Activated naive CD4-positive, alpha-beta T cell treated with anti-CD3 and anti-CD28 coated beads for 36 hours (primary cell): ENCODE measurements at regions of chr14 and their contacts with region 1.

Region 1: DNA sequence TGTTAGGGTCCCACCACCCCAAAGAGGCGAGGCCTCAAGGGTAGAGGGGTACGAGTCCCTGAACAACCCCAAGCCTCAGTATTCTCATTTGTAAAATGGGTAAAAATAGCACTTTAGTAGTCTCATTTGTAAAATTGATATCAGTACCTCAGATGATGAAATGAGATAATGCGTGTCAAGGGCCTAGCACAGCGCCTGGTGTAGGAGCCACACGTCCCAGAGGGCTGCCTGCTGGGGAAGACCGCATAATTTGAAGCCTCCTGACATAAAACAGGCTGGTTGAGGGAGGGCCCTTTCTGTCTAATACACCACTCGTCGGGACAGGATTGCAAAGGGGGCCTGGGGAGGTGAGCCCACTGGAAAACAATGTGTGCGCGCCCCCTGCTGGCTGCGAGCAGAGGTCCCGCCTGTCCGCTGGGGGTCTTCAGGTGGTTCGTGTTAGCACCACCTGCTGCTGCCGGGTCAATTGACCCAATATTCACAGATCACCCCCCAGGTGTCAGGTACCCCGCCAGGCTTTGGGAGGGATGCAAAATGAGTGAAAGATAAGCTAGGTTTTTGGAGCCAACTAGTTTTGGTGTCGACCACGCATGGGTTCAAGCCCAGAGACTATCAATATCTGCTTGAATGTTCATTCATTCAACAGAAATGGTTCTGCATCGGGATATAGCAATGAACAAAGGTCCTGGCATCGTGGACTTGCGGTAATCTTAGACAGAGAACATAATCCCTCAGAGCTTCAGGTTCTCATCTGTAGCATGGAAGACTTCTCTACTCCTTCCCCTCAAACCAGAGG is 24.7 kb upstream of the IRF2BPL start:
- DNase-seq: peak; percentile 86
- H3K4me3 Mint-ChIP-seq: no peak overlapping the region
- H3K27ac Mint-ChIP-seq: no peak overlapping the region
- H3K4me1 Mint-ChIP-seq: peaks cover 21% of the 10 kb centered on the region
- H3K27me3 Mint-ChIP-seq: no peaks in the 10 kb centered on the region

Region 2: DNA sequence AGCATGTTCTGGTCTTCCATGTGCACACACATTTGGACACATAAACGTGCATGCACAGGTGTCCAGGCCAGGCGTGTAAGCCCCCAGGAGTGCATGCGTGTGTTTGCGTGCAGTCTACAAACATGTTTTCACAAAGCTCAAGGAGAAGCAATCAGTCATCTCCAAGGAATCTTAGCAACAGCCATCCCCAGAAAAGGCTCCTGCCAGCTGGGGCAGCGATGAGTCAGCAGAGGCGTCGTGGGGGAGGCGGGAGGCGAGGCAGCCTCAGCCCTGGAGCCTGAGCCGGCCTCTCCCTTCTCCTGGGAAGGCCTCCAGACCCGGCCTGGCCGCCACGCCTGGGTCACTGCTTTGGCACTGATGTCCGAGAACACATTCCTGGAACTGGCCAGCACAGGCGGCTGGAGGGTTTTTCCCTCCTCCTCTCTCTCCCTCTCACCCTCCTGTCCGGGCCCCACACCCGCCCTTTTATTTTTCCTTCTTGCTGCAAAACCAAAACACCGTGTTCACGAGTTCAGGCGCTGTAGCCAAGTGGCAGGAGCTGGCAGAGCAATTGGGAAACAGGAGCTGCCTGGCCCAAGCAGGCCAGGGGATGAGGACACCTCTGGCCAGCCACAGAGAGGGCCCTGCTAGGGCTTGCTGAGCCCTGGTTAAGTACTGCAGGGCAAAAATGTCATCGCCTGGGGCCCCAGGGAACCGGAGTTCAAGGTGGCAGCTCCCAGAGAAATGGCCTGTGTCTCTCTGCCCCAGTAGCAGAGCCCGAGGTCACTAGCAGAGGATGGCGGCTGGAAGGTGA is 134.3 kb before region 1 on chr14:
- CTCF ChIA-PET with region 1: interaction called, 299 read pairs
- intact Hi-C with region 1: no loop called
- DNase-seq: peak; percentile 42
- H3K4me3 Mint-ChIP-seq: no peak overlapping the region
- H3K27ac Mint-ChIP-seq: peak overlapping the region; percentile 16
- H3K4me1 Mint-ChIP-seq: peaks cover 43% of the 10 kb centered on the region
- H3K27me3 Mint-ChIP-seq: no peaks in the 10 kb centered on the region

Region 3: GRCh38 chr14:76947078-76947837 is 106.0 kb before region 1 on chr14:
- CTCF ChIA-PET with region 1: interaction called, 30 read pairs
- intact Hi-C with region 1: loop called (anchors 1 kb)
- DNase-seq: peak; percentile 93
- H3K4me3 Mint-ChIP-seq: no peak overlapping the region
- H3K27ac Mint-ChIP-seq: peak overlapping the region; percentile 39
- H3K4me1 Mint-ChIP-seq: peaks cover 33% of the 10 kb centered on the region
- H3K27me3 Mint-ChIP-seq: no peaks in the 10 kb centered on the region

Region 4: GRCh38 chr14:77023001-77023996 is 29.9 kb before region 1 on chr14:
- CTCF ChIA-PET with region 1: interaction called, 20 read pairs
- intact Hi-C with region 1: loop called (anchors 1 kb)
- DNase-seq: peak; percentile 73
- H3K4me3 Mint-ChIP-seq: peak overlapping the region; percentile 26
- H3K27ac Mint-ChIP-seq: peak overlapping the region; percentile 86
- H3K4me1 Mint-ChIP-seq: peaks cover 49% of the 10 kb centered on the region
- H3K27me3 Mint-ChIP-seq: no peaks in the 10 kb centered on the region

Region 5: DNA sequence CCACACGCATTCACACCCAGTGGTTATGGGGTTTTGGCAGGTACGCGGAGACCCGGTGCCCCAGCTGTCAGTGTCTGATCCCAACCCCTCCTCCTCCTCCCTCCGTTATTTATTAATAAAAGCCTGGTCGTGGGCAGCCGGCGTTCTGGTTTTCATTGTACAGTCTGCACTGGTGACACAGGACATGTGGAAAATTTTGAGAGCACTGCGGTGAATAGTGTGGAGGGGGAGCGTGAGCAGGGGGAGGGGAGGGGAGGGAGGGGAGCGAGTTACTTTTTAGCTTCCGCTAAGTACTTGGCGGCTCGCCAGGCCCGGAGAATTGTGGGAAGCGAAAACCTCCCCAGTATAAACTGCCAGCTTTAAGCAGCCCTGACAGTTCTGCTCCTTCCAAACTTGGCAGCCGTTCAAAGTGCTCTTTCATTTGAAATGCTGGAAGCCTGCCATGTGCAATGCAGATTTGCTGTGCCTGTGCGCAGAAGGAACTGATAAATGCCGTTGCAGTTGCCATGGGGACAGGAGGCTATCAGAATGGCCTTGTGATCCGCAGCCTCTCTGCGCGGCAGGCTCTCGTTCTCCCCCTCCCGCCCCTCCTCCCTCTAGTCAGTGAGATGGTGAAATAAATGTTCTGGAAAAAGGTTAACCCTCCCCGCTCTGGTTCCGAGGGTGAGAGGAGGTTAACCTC is 13.0 kb before region 1 on chr14:
- CTCF ChIA-PET with region 1: interaction called, 28 read pairs
- intact Hi-C with region 1: loop called (anchors 1 kb)
- DNase-seq: peak; percentile 99
- H3K4me3 Mint-ChIP-seq: peak overlapping the region; percentile 77
- H3K27ac Mint-ChIP-seq: peak overlapping the region; percentile 99
- H3K4me1 Mint-ChIP-seq: peaks cover 88% of the 10 kb centered on the region
- H3K27me3 Mint-ChIP-seq: no peaks in the 10 kb centered on the region